ENCODE measurements at regions of chr2 and their contacts with region 1.

Region 1: DNA sequence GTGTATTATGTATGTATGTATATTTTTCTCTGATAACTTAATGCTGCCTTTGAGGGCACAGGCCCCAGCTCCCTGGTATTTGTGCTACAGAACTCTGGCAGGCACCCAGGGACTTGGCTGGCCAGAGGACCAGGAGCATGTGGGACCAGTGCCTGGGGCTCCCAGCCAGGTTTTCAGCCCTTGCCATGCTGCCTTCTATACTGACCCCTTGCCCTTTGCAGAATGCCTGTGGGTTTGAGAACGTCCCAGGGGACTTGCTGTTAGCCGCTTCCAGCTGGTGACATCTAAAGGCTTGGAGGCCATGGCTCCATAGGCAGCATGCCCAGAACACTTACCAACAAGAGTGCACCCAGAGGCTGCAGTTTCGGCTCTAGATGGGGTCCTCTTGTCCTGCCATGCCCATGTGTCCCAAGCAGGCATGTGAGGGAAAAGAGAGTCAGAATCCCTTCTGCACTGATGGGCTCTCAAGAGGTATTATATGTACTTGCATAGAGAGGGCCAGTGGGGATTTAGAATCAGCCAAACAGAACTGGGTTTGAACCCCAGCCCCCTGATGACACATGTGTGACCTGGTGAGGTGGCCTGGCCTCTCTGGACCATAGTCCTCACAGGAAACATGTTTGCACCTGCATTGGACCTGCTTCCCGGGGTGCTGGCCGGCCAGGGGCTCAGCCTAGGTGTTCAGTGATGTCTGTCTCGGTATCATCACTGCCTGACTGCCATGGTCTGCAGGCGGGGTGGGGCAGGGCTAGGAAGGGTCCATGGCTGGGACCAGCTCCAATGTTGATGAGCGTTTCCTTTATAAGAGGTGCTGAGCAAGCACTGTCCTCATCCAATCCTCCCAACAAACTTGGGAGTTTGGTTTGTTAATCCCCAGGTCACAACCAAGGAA is 119.2 kb upstream of the FHL2 start:
- DNase-seq: peak; percentile 91

Region 2: GRCh38 chr2:105369747-105370690 is 148.0 kb before region 1 on chr2:
- intact Hi-C with region 1: loop called (anchors 2 kb)
- DNase-seq: peak; percentile 92

Region 3: GRCh38 chr2:105409717-105410116 is 108.3 kb before region 1 on chr2:
- intact Hi-C with region 1: loop called (anchors 1 kb)
- DNase-seq: peak; percentile 92

Region 4: DNA sequence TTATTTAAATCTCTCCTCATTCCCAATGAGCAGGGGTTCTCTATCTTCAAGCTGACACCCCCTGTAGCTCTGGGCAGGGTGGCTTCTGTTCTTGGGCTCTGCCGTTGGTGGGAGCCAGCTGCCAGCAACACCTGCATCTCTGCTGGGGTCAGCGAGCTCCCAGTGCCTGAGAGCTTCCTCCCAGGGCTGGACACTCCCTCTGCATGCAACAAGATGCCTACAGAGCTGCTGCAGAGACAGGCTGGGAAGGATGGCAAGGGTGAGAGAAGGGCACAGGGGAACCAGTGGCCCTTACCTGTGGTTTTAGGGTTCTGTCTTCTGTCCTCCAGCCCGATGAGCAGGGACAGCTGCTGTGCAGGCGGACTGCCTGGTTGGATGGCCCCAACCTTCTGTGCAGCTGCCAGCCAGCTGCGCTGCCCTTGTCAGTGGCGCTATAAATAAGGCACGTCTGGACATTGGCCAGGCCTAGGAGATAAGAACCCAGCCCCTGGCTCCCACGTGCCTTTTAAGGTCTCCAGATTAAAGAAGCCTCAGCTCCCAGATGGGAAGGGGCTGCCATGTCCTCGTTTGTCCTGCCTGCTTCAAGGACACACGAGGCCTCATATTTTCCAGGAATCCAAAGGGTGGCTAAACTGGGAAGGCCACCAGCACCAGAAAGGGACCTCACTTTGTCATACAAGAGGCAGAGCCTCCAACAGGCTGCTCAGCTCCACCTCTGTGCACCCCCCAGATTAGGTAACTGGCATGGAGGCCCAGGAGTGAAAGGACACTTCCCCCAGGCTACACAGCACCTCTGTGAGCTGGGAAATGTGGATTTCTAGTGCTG is 79.7 kb before region 1 on chr2:
- intact Hi-C with region 1: loop called (anchors 1 kb)
- DNase-seq: peak; percentile 87

Region 5: GRCh38 chr2:105487142-105488069 is 30.7 kb before region 1 on chr2:
- intact Hi-C with region 1: loop called (anchors 2 kb)
- DNase-seq: no peak

Region 6: GRCh38 chr2:105496271-105496670 is 21.8 kb before region 1 on chr2:
- intact Hi-C with region 1: loop called (anchors 1 kb)
- DNase-seq: no peak

Measured in cardiac septum (tissue), 1 donor.